Activated CD4-positive, alpha-beta T cell treated with anti-CD3 and anti-CD28 coated beads, Interleukin-2, amount 10 ng/mL, durations not matched to agents 7 days and 5 days (primary cell): ENCODE measurements at regions of chr16 and their contacts with region 1.

Region 1: DNA sequence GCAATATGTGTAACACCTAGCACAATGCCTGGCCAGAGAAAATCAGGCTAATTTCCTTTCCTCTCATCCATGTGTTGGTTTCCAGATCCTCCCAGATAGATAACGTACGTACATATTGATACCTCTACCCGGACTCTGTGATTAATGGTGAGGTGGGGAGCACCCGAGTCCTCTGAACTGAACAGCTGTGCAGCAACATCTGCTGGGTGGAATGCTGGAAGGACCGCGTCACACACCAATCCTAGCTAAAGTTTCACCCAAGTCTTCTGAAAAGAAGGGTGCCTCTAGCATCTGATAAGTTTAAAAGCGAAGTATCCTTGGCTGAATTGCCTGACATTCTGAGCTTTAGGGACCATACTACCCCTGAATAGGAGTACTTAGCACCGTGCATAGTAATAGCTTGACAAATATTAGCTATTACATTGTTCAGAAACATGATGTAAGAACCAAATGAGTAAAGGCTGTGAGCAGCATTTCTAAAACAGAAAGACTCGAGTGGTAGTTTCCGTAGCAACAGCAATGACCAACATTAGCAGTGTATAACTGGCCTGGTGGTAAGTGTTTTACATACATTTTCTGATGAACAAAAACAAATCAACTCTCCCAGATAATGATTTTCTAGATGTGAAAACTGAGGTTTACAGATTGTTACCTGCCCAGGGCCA is 91.4 kb downstream of the SYCE1L start:
- DNase-seq: no peak
- H3K4me3 Mint-ChIP-seq: no peak overlapping the region
- H3K27ac Mint-ChIP-seq: no peak overlapping the region
- H3K4me1 Mint-ChIP-seq: no peaks in the 10 kb centered on the region
- H3K27me3 Mint-ChIP-seq: no peaks in the 10 kb centered on the region

Region 2: GRCh38 chr16:77317059-77317458 is 26.5 kb after region 1 on chr16:
- CTCF ChIA-PET with region 1: no interaction called
- POLR2A ChIA-PET with region 1: interaction called, 13 read pairs
- DNase-seq: no peak
- H3K4me3 Mint-ChIP-seq: no peak overlapping the region
- H3K27ac Mint-ChIP-seq: no peak overlapping the region
- H3K4me1 Mint-ChIP-seq: no peaks in the 10 kb centered on the region
- H3K27me3 Mint-ChIP-seq: no peaks in the 10 kb centered on the region

Region 3: DNA sequence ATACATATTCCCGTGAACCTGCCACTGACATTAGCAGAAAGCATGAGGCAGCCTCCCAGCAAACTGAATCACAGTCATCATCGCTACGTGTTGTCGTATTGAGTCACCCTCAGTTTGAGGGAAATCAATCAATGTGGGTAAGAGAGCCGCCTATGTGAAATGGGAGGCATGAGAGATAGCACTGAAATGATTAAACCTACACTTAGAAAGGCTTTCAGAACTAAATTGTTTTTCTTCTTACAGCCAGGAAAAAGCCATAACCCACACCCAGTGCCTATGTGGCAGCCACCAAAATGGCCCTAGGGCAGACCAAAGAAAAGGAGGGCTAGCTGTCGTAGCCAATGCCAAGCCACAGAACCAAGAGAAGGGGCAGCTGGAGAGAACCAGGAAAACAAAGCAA is 53.8 kb after region 1 on chr16:
- CTCF ChIA-PET with region 1: no interaction called
- POLR2A ChIA-PET with region 1: no interaction called
- DNase-seq: no peak
- H3K4me3 Mint-ChIP-seq: no peak overlapping the region
- H3K27ac Mint-ChIP-seq: no peak overlapping the region
- H3K4me1 Mint-ChIP-seq: no peaks in the 10 kb centered on the region
- H3K27me3 Mint-ChIP-seq: peaks cover 3% of the 10 kb centered on the region

Region 4: GRCh38 chr16:77387815-77388209 is 97.2 kb after region 1 on chr16:
- CTCF ChIA-PET with region 1: no interaction called
- POLR2A ChIA-PET with region 1: no interaction called
- DNase-seq: no peak
- H3K4me3 Mint-ChIP-seq: no peak overlapping the region
- H3K27ac Mint-ChIP-seq: no peak overlapping the region
- H3K4me1 Mint-ChIP-seq: no peaks in the 10 kb centered on the region
- H3K27me3 Mint-ChIP-seq: peaks cover 2% of the 10 kb centered on the region